ENCODE measurements at regions of chr15 and their contacts with region 1.

Region 1: GRCh38 chr15:92714477-92715401 is 59.2 kb upstream of the FAM174B start:
- ATAC-seq: peak; percentile 81 to 92 (median 90)
- H3K4me3 ChIP-seq: peak overlapping the region; percentile 48 to 50 (median 49)
- H3K27ac ChIP-seq: peak overlapping the region; percentile 62 to 69
- H3K4me1 ChIP-seq: peaks cover 0 to 3% of the 10 kb centered on the region in 2 donors

Region 2: DNA sequence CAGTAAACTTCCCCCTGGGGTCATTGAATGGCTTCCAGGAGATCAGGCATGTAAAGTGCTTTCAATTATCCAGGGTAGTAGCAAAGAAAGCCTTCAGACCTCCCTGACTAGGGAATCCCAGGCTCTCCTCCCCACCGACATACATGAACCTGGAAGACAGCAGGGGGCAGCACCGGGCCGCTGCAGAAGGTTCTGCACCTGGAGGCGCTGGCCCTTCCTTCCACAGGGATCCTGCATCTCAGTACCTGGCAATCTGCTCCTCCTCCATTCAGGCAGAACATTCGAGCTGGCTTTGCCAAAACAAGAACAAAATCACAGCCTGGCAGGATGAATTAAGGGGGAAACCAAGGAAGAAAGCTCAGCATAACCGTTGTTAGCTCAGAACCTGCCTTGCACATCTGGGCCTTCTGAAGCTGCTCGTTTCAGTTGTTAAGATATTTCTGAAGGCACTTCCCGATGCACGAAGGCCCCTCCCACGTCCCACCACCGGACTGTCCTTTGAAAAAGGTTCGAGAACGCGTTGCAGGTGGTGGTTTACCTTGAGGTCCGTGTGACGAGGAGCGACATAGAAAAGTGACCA is 623.5 kb before region 1 on chr15:
- in situ Hi-C with region 1: loop called in 5 of 9 experiments (anchors 5 to 25 kb)
- ATAC-seq: peak; percentile 53 to 93 (median 74)
- H3K4me3 ChIP-seq: no peak overlapping the region
- H3K27ac ChIP-seq: no peak overlapping the region
- H3K4me1 ChIP-seq: no peaks in the 10 kb centered on the region

Region 3: DNA sequence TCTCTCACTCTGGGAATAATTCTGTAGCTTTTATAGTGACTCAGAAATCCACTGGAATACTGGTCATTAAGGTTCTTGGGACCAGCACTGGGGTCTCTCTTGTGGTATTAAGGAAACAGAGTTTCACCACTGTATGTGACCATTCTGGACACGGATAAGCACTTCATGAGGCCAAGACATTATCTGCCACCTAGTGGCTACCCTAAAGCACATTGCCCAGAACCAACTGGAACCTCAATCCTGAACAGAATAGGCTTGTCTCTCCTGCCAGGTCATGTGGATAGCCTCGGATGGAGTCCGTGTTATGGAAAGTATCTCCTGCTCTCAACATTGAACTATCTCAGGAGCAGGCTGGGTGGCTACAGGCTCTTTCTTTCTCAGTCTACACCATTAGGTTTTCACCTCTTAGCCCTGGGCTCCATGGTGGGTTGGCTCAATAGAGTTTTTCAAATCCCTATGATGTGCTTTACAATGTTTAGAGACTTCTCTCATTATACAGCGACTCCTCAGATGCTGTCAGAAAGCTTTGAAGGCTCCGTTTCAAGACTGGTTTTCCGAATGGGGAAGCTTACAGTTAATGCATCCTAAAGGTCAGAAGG is 488.6 kb before region 1 on chr15:
- in situ Hi-C with region 1: loop called in 1 of 9 experiments (anchors 25 kb)
- ATAC-seq: peak in 4 of 8 experiments; percentile 27 to 95 (median 84)
- H3K4me3 ChIP-seq: no peak overlapping the region
- H3K27ac ChIP-seq: no peak overlapping the region
- H3K4me1 ChIP-seq: no peaks in the 10 kb centered on the region

Region 4: GRCh38 chr15:92421976-92422375 is 292.8 kb before region 1 on chr15:
- in situ Hi-C with region 1: loop called in 1 of 9 experiments (anchors 25 kb)
- ATAC-seq: peak in 4 of 8 experiments; percentile 12 to 67 (median 48)
- H3K4me3 ChIP-seq: no peak overlapping the region
- H3K27ac ChIP-seq: no peak overlapping the region
- H3K4me1 ChIP-seq: no peaks in the 10 kb centered on the region

Region 5: GRCh38 chr15:92527197-92527596 is 187.5 kb before region 1 on chr15:
- in situ Hi-C with region 1: loop called in 1 of 9 experiments (anchors 25 kb)
- ATAC-seq: no peak
- H3K4me3 ChIP-seq: no peak overlapping the region
- H3K27ac ChIP-seq: no peak overlapping the region
- H3K4me1 ChIP-seq: peaks cover 11 to 12% of the 10 kb centered on the region in 2 donors

Region 6: DNA sequence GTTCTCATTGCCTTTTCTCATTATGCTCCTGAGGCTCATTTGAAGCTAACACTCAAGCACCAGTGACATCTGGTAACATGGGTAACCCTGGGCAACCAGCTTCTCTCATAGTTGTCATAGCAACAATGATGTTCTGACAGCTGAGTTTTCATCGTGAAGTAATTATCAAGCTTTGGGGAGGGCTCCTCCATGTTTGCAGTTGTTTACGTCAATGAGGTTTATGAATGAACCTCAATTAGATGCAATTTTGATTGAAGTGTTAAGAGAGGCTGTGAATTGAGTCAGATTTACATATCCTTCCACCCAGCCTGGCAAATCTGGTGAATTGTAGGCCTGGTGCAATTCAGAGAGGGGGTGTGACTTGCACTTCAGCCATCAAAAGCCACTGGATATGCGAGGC is 66.1 kb after region 1 on chr15:
- in situ Hi-C with region 1: no loop called
- ATAC-seq: peak in 7 of 8 experiments; percentile 54 to 95 (median 94)
- H3K4me3 ChIP-seq: no peak overlapping the region
- H3K27ac ChIP-seq: peak overlapping the region in 1 of 2 donors; percentile 26
- H3K4me1 ChIP-seq: peaks cover 3 to 12% of the 10 kb centered on the region in 2 donors

Region 7: DNA sequence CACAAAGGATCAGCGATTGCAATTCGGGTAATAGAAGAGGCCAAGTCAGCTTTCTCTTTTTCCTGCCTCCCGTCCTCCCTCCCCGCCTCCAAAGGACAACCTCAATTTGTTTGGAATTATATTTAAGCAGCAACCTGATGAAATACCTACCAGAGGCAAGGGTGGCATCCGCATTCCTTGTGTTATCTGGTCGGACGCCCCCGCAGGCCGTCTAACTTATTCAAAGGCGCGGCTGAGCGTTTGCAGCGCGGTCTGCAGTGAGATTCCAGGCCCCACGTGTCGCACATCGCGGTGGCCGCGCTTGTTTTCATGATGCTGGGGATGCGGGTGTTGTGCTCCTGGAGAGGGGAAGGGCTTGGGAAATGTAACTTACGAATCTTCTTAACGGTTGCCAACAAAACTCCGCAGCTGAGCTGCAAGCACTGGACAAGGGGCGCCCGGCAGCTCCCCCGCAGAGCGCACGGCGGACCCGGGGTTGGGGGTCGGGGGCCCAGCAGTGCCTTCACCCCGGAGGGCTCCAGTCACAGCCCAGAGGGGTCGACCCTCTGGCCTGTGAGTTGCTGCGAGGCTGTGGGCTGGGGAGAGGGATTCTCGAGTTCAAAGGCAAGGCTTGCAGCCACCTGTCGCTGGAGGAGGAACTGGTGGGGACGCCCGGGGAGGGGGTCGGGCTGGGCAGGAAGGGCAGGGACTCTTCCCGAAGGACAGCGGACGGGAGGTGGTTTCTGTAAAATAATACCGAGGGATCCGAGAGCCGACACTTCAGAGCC is 394.8 kb after region 1 on chr15:
- in situ Hi-C with region 1: no loop called
- ATAC-seq: no peak
- H3K4me3 ChIP-seq: no peak overlapping the region
- H3K27ac ChIP-seq: no peak overlapping the region
- H3K4me1 ChIP-seq: peaks cover 9 to 11% of the 10 kb centered on the region in 2 donors